ENCODE measurements at regions of chr15 and their contacts with region 1.

Region 1: DNA sequence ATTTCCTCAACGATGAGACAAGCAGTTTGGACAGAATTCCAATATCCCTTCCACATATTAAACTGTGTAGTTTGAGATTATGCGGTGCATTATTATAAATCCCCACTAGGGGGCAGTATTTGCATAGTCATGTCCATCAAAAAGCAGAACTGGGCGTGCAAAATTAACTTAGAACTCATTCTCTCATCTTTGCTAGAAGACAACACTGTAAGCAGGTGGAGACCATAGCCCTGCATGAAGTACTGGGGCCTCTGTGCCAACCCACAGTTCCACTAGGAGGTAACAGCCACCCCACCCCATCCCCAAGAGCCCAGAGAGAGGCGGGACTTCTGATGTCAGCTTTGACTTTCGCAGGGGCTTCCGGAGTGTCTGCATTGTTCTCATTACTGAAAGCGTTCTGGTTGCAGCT is 106.6 kb upstream of the TMC3 start:
- DNase-seq: peak in 1 of 2 donors; percentile 70
- ATAC-seq: peak in 7 of 8 donors; percentile 64 to 74 (median 71)
- H3K4me3 ChIP-seq: peak overlapping the region in 1 of 10 donors; percentile 2
- H3K27ac ChIP-seq: no peak overlapping the region
- H3K4me1 ChIP-seq: peaks cover 0 to 5% (median 0%) of the 10 kb centered on the region in 9 donors
- H3K27me3 ChIP-seq: no peaks in the 10 kb centered on the region
- CTCF ChIP-seq: peak; percentile 80 to 97 (median 86)

Region 2: DNA sequence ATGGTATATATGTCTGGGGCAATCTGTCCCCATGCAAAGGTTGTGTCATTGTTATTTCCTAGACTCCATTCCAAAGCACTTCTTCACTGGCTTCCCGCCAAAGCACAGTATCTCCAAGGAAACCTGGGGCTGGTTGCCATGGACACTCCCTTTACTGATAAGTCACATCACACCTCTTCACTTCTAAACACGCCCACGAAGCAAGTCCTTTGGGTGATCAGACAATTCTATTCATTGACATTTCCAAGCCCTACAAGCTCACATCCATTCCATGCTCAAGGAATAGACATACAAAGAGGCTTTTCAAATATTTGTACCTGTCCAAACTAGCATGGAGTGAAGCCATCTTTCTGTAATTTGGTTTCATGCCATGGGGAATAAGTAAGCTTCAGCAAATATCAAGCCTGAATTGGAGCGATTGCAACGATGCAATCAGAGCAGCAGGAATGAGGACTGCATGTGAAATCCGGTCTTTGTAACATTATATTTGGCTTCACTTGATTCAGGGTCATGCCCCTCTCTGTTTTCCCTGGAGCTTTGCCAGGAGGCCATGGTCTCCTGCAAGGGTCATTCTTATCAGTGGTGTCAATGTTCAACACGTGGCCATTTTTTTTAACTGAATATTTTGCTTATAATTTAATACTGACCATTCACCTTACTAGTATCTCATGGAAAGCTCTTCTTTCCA is 94.9 kb after region 1 on chr15:
- intact Hi-C with region 1: no loop called
- DNase-seq: no peak
- ATAC-seq: no peak
- H3K4me3 ChIP-seq: no peak overlapping the region
- H3K27ac ChIP-seq: no peak overlapping the region
- H3K4me1 ChIP-seq: peaks cover 0 to 9% (median 0%) of the 10 kb centered on the region in 9 donors
- H3K27me3 ChIP-seq: peaks cover 0 to 7% (median 2%) of the 10 kb centered on the region in 7 donors
- CTCF ChIP-seq: no peak

Region 3: GRCh38 chr15:81813178-81813577 is 332.5 kb after region 1 on chr15:
- intact Hi-C with region 1: loop called in 1 of 10 experiments (anchors 10 kb)
- DNase-seq: no peak
- ATAC-seq: no peak
- H3K4me3 ChIP-seq: no peak overlapping the region
- H3K27ac ChIP-seq: no peak overlapping the region
- H3K4me1 ChIP-seq: peaks cover 0 to 13% (median 5%) of the 10 kb centered on the region in 9 donors
- H3K27me3 ChIP-seq: no peaks in the 10 kb centered on the region
- CTCF ChIP-seq: peak in 6 of 9 donors; percentile 6 to 44 (median 14)

Region 4: GRCh38 chr15:81939604-81940440 is 459.2 kb after region 1 on chr15:
- intact Hi-C with region 1: loop called in 3 of 10 experiments (anchors 2 to 10 kb)
- DNase-seq: no peak
- ATAC-seq: no peak
- H3K4me3 ChIP-seq: no peak overlapping the region
- H3K27ac ChIP-seq: no peak overlapping the region
- H3K4me1 ChIP-seq: no peaks in the 10 kb centered on the region
- H3K27me3 ChIP-seq: no peaks in the 10 kb centered on the region
- CTCF ChIP-seq: peak; percentile 20 to 67 (median 58)

Measured in heart right ventricle (tissue), 16 donors.